A549 (cell line): ENCODE measurements at regions of chr15 and their contacts with region 1.

Region 1: GRCh38 chr15:33729653-33730052 is 238.6 kb upstream of the CHRM5 start:
- DNase-seq: peak; percentile 25 to 36
- ATAC-seq: peak; percentile 52 to 63; a peak in 4 of 6 replicates
- H3K4me3 ChIP-seq: no peak overlapping the region
- H3K27ac ChIP-seq: no peak overlapping the region
- H3K4me1 ChIP-seq: no peaks in the 10 kb centered on the region
- CTCF ChIP-seq: peak; percentile 57
- EP300 ChIP-seq: no peak
- POLR2A ChIP-seq: no peak
- RAD21 ChIP-seq: peak; percentile 37 to 49; a peak in 3 of 5 replicates

Region 2: DNA sequence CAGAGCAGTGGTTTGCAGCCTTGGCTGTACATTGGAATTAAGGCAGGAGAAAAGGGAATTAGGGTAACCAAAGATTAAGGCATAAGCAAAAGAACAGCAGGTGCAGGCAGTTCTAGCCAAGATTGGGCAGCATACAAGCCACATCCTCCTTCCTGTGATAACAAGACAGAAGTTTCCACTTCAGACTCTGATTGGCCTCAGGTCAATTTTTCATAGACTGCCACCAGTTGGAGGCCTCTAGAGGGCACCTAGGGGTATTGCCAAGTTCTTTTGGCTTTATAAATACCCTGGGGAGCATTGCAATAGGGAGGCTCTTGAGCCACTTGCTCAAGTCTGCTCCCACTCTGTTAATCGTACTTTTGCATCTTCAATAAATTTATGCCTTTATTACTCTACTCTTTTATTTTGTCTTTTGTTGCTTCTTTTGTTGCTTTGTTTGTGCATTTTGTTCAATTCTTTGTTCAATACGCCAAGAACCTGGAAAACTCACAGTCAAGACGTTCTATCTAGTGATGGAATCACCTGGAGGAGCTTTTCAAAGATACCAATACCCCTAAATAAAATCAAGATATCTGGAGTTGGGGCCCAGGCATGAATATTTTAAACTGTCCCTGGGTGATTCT is 503.0 kb before region 1 on chr15:
- CTCF ChIA-PET with region 1: interaction called, 20 read pairs
- POLR2A ChIA-PET with region 1: no interaction called
- DNase-seq: peak; percentile 85 to 86
- ATAC-seq: peak; percentile 88 to 97
- H3K4me3 ChIP-seq: no peak overlapping the region
- H3K27ac ChIP-seq: no peak overlapping the region
- H3K4me1 ChIP-seq: no peaks in the 10 kb centered on the region
- CTCF ChIP-seq: peak; percentile 57
- EP300 ChIP-seq: no peak
- POLR2A ChIP-seq: no peak
- RAD21 ChIP-seq: peak; percentile 37 to 39; a peak in 4 of 5 replicates

Region 3: DNA sequence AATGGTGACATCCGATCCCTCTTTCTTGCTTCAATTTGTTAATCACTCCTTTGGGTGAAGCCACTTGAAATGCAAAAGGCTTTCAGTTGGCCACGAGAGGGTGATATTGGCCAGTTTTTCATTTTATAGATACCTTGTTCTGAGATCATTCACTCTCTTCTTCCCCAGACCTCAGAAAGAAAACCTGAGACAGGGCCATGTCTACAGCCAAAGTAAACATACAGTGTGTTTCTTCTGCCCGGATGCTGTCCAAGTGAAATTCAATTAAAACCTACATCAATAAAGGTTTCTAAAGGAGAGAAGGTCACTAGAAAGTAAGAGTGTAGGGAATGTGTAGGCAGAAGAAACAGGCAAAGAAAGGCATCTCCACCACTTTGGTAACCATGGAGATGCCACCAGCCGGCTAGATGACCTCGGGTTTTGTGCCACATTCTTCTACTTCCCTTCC is 495.6 kb before region 1 on chr15:
- CTCF ChIA-PET with region 1: interaction called, 60 read pairs
- POLR2A ChIA-PET with region 1: no interaction called
- DNase-seq: peak; percentile 55 to 65
- ATAC-seq: peak; percentile 84 to 93
- H3K4me3 ChIP-seq: no peak overlapping the region
- H3K27ac ChIP-seq: no peak overlapping the region
- H3K4me1 ChIP-seq: no peaks in the 10 kb centered on the region
- CTCF ChIP-seq: peak; percentile 87
- EP300 ChIP-seq: no peak
- POLR2A ChIP-seq: no peak
- RAD21 ChIP-seq: peak; percentile 90 to 95

Region 4: DNA sequence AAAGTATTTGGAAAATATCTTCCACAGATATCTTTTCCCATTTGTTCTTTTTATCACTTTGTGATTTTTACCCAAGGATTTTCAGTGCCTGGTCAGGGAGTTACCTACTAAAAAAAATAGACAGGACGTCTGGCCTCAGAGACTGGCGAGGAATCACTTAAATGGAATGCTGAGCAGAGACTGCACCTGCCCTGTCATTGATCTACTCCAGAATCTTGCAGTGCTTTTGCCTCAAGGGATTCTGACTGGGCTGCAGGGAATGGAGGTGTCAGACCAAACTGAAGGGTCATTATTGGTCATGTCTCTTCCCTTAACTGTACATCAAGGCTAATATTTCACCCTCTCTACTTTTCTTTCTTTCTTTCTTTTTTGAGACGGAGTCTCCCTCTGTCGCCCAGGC is 431.0 kb before region 1 on chr15:
- CTCF ChIA-PET with region 1: interaction called, 41 read pairs
- POLR2A ChIA-PET with region 1: no interaction called
- DNase-seq: no peak
- ATAC-seq: no peak
- H3K4me3 ChIP-seq: no peak overlapping the region
- H3K27ac ChIP-seq: no peak overlapping the region
- H3K4me1 ChIP-seq: no peaks in the 10 kb centered on the region
- CTCF ChIP-seq: no peak
- EP300 ChIP-seq: no peak
- POLR2A ChIP-seq: no peak
- RAD21 ChIP-seq: no peak

Region 5: DNA sequence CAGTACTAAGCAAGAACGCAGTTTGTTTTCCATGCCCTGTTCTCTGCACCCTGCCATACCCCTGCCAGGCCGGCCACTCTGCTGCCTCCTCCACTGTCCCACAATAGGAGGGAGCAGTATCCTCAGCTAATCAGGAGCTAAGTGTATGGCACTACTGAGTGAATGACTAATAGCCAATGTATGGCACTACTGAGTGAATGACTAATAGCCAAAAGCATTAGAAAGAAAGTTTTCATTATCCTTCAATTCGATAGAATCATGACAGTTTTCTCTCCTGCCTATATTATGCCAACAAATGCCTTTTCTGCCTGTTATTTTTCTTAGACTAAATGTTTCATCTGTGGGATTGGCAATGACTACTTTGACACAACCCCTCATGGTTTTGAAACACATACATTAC is 131.1 kb after region 1 on chr15:
- CTCF ChIA-PET with region 1: no interaction called
- POLR2A ChIA-PET with region 1: no interaction called
- DNase-seq: peak in 1 of 2 experiments; percentile 17
- ATAC-seq: peak; percentile 79 to 85
- H3K4me3 ChIP-seq: no peak overlapping the region
- H3K27ac ChIP-seq: no peak overlapping the region
- H3K4me1 ChIP-seq: peaks cover 6% of the 10 kb centered on the region; the same call in 2 of the 3 replicates
- CTCF ChIP-seq: no peak
- EP300 ChIP-seq: no peak
- POLR2A ChIP-seq: no peak
- RAD21 ChIP-seq: no peak